BJ (cell line): ENCODE measurements at regions of chr3 and their contacts with region 1.

Region 1: DNA sequence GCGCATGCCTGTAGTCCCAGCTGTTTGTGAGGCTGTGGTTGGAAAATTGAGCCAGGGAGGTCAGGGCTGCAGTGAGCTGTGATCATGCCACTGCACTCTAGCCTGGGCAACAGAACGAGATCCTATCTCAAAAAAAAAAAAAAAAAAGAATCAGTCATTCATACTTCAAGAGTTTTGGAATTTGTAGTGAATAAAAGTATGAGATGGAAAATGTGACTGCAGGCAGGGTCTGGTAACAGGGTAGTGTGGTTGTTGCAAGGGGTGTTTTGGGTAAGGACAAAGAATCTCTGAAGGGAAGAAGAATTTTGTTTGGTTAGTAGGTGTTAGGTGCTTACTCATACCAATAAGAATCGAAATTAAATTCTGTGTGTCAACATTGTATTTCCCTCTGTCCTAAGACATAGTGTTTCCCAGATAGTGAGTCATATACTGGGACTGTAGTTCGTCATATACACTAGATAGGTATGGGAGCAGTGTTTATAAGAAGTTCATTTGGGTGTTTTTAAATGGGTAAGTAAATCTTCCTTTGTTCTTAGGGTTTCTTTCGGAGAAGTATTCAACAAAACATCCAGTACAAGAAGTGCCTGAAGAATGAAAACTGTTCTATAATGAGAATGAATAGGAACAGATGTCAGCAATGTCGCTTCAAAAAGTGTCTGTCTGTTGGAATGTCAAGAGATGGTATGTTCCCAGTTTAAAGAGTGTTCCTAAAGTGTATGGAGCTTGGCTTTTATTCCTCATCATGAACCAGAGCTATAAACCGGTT is 14.2 kb downstream of the NR1D2 start:
- DNase-seq: peak; percentile 91
- H3K4me3 ChIP-seq: no peak overlapping the region
- H3K27me3 ChIP-seq: no peaks in the 10 kb centered on the region
- CTCF ChIP-seq: no peak

Region 2: GRCh38 chr3:23865595-23866450 is 93.5 kb before region 1 on chr3:
- CTCF ChIA-PET with region 1: no interaction called
- POLR2A ChIA-PET with region 1: no interaction called
- DNase-seq: no peak
- H3K4me3 ChIP-seq: no peak overlapping the region
- H3K27me3 ChIP-seq: no peaks in the 10 kb centered on the region
- CTCF ChIP-seq: no peak

Region 3: DNA sequence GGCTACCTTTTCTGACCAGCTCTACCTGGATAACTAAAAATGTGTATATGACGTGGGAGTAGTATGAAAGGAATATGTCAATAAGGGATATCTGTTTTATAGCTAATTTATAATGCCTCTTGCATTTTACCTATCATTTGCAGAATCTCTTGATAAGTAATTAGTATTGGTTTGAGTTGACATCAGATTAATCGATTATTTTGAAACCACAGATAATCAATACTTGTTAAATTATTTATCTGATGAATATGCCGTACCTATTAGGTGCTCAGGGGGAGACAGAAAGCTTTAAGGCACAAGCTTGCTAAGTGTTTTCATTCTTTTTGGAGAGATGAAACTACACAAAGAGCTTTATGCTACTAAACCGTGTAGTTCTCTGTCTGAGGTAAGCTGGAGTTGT is 10.1 kb after region 1 on chr3:
- CTCF ChIA-PET with region 1: interaction called, 4 read pairs
- POLR2A ChIA-PET with region 1: interaction called, 29 read pairs
- DNase-seq: no peak
- H3K4me3 ChIP-seq: no peak overlapping the region
- H3K27me3 ChIP-seq: no peaks in the 10 kb centered on the region
- CTCF ChIP-seq: no peak

Region 4: DNA sequence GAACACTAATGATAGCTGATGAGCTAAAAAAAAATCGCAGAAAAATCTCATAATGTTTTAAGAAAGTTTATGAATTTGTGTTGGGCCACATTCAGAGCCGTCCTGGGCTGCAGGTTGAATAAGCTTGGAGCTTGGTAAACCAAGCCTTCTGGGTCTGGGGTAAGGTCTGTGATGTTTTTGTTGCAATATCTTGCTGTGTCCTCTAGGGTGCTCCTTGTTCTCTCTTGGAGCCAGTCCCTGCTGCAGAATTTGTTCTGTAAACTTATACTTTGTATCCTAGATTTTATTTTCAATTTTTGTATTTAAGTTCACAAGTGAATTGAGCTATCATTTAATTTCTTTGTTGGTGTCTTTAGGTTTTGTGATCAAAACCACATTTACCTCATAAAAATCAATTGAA is 129.5 kb after region 1 on chr3:
- CTCF ChIA-PET with region 1: no interaction called
- POLR2A ChIA-PET with region 1: interaction called, 10 read pairs
- DNase-seq: no peak
- H3K4me3 ChIP-seq: no peak overlapping the region
- H3K27me3 ChIP-seq: no peaks in the 10 kb centered on the region
- CTCF ChIP-seq: peak; percentile 64